ENCODE measurements at regions of chr1 and their contacts with region 1.

Region 1: GRCh38 chr1:229479660-229480399 is 28.3 kb downstream of the NUP133 start:
- DNase-seq: no peak

Region 2: GRCh38 chr1:229440851-229441537 is 38.8 kb before region 1 on chr1:
- in situ Hi-C with region 1: loop called (anchors 5 kb)
- DNase-seq: no peak